A673 (cell line): ENCODE measurements at regions of chr4 and their contacts with region 1.

Region 1: GRCh38 chr4:157045507-157046127 is 30.3 kb upstream of the GLRB start:
- DNase-seq: peak; percentile 86
- H3K4me3 ChIP-seq: no peak overlapping the region
- H3K27ac ChIP-seq: no peak overlapping the region
- H3K4me1 ChIP-seq: peaks cover 19% of the 10 kb centered on the region
- H3K27me3 ChIP-seq: no peaks in the 10 kb centered on the region
- CTCF ChIP-seq: peak; percentile 89

Region 2: DNA sequence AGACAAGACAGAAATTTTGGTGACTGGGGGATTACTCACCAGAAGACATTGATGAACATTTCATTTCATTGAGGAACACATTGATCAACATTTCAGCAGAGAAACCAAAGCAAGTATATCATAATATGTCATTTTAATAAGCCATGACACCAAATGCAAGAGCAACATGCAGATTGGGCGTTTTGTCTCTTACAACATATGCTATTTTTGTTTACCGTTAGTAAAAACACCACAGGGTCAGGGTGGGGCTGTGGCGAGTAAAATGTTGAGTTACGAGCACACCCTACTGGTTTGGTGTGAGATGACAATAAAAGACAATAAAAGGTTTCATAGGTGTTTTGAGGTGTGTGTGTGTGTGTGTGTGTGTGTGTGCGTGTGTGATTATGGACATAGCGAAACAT is 368.5 kb before region 1 on chr4:
- CTCF ChIA-PET with region 1: no interaction called
- POLR2A ChIA-PET with region 1: no interaction called
- intact Hi-C with region 1: loop called (anchors 10 kb)
- DNase-seq: peak; percentile 45
- H3K4me3 ChIP-seq: no peak overlapping the region
- H3K27ac ChIP-seq: no peak overlapping the region
- H3K4me1 ChIP-seq: peaks cover 12% of the 10 kb centered on the region
- H3K27me3 ChIP-seq: no peaks in the 10 kb centered on the region
- CTCF ChIP-seq: peak; percentile 44

Region 3: GRCh38 chr4:156771171-156771837 is 274.3 kb before region 1 on chr4:
- CTCF ChIA-PET with region 1: no interaction called
- POLR2A ChIA-PET with region 1: no interaction called
- intact Hi-C with region 1: loop called (anchors 10 kb)
- DNase-seq: peak; percentile 96
- H3K4me3 ChIP-seq: peak overlapping the region; percentile 18
- H3K27ac ChIP-seq: peak overlapping the region; percentile 78
- H3K4me1 ChIP-seq: peaks cover 71% of the 10 kb centered on the region
- H3K27me3 ChIP-seq: no peaks in the 10 kb centered on the region
- CTCF ChIP-seq: no peak

Region 4: DNA sequence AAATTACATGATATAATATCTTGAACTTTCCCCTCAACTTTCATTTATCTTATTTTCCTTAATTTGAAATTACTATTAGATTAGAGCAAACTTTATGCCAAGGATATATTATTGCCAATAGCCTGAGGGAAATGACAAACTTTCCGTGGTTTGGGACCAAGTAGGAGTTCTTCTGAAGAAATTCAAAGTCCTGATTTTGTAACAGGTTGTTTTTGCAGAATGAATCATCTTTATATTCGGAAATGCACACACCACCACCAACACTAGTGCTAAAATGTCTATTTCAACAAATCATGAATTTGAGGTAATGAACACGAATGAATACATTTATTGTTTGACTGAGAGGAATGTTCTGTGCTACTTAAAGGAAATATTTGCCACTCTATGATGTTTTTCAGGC is 401.6 kb after region 1 on chr4:
- CTCF ChIA-PET with region 1: no interaction called
- POLR2A ChIA-PET with region 1: no interaction called
- intact Hi-C with region 1: no loop called
- DNase-seq: no peak
- H3K4me3 ChIP-seq: no peak overlapping the region
- H3K27ac ChIP-seq: no peak overlapping the region
- H3K4me1 ChIP-seq: no peaks in the 10 kb centered on the region
- H3K27me3 ChIP-seq: no peaks in the 10 kb centered on the region
- CTCF ChIP-seq: no peak